ENCODE measurements at regions of chr5 and their contacts with region 1.

Region 1: GRCh38 chr5:123554601-123555000 is 42.6 kb downstream of the CSNK1G3 start:
- DNase-seq: no peak
- H3K4me3 Mint-ChIP-seq: no peak overlapping the region
- H3K27ac Mint-ChIP-seq: no peak overlapping the region
- H3K4me1 Mint-ChIP-seq: peaks cover 25% of the 10 kb centered on the region
- H3K27me3 Mint-ChIP-seq: no peaks in the 10 kb centered on the region

Region 2: DNA sequence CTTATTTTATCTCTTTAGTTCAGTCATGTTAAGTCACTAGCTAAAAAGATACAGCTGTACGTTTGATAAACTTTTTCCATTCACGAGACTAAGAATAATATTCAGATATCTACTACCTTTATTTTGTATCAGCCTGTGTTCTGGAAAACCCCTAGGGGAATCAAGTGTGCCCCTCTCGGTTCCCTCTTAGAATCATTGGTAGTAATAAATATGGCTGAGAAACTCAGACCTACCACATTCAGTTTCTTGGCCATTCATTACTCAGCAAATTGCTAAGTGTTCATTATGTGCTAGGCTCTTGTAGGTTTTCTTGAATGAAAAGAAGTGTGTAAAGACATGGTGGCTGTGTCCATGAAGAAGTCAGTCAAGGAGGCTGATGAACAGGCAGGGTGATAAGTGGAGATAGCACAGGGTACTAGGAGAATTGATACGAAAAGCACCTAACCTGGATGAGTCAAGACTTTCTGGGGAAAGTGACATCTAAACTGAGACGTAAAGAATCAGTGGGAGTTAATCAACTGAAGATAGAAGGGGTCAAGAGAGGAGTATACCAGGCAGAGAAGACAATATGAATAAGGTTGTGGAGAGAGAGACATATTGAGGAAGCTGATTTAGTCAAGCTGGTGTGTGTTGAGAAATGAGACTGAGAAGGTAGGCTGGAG is 43.6 kb after region 1 on chr5:
- intact Hi-C with region 1: loop called (anchors 5 kb)
- DNase-seq: no peak
- H3K4me3 Mint-ChIP-seq: no peak overlapping the region
- H3K27ac Mint-ChIP-seq: no peak overlapping the region
- H3K4me1 Mint-ChIP-seq: peaks cover 11% of the 10 kb centered on the region
- H3K27me3 Mint-ChIP-seq: no peaks in the 10 kb centered on the region

Region 3: GRCh38 chr5:123916331-123917121 is 361.9 kb after region 1 on chr5:
- intact Hi-C with region 1: no loop called
- DNase-seq: no peak
- H3K4me3 Mint-ChIP-seq: no peak overlapping the region
- H3K27ac Mint-ChIP-seq: no peak overlapping the region
- H3K4me1 Mint-ChIP-seq: no peaks in the 10 kb centered on the region
- H3K27me3 Mint-ChIP-seq: no peaks in the 10 kb centered on the region